Motor neuron (in vitro differentiated cells): ENCODE measurements at regions of chr7 and their contacts with region 1.

Region 1: DNA sequence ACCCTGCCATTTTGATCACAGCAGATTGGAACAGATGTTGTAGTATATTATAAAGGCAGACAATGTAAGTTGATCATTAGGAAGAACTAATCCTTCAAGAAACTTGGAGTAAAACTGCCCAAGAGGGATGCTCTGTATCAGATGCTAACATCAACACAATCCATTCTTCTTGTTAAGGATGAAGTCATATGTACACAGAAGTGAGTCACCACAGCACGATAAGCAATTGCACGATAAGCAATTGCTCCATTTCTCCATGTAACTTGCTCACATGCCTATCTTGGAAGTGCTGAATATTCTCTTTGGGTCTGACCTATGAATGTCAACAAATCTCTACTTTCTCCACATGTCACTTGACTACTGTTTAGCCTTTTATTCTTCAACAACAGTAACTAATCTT is 41.5 kb upstream of the DMTF1 start:
- ATAC-seq: peak in 6 of 8 experiments; percentile 34 to 100 (median 78)
- H3K4me3 ChIP-seq: no peak overlapping the region
- H3K27ac ChIP-seq: no peak overlapping the region
- H3K4me1 ChIP-seq: no peaks in the 10 kb centered on the region

Region 2: DNA sequence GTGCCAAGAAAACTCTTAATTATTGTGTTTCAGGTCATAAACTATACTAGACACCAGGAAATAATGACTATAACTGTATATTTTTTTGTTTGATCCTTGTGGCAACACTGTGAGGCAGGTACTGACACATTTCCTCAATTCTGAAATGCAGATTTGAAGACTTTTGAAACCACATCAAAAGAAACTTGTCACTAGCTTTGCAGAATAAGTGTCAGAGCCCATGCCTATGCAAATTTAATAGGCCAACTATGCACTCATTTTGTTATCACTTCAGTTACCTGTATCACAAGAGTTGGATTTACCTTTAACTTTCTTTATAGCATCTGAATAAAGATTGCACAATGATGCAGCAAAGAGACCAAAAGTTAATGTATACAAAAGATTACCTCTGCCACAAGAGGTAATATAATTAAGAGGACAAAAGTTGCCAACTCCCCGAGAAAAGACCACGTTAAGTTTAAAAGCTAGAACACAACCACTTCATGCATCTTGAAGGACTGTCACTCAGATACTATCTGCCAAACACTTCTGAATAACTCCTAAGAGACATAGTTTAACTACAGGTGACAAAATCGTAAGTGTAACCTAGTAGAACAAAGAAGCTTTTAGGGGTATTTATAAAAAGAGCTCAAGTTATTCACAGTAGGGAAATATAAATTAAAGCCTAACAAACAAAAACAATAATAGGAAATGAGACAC is 131.8 kb before region 1 on chr7:
- in situ Hi-C with region 1: loop called in 1 of 9 experiments (anchors 25 kb)
- ATAC-seq: no peak
- H3K4me3 ChIP-seq: no peak overlapping the region
- H3K27ac ChIP-seq: no peak overlapping the region
- H3K4me1 ChIP-seq: no peaks in the 10 kb centered on the region

Region 3: DNA sequence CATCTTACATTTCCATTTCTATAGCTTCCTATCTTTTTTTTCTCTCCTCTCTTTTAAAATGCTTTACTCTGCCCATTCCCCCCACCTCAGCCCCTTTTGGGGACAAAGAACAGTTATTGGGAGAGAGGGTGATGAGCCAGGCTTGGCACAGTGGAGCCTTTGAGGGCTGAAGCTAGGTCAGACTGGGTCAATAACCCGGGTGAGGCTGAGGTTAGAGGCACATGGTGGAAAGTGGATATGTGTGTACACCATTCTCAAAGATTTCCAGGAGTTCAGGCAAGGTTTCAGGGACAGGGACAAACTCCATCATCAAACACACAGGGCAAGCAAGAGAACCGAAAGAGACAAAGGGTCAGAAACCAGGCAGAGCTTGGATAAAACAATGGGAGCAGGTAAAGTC is 353.2 kb after region 1 on chr7:
- in situ Hi-C with region 1: no loop called
- ATAC-seq: no peak
- H3K4me3 ChIP-seq: no peak overlapping the region
- H3K27ac ChIP-seq: no peak overlapping the region
- H3K4me1 ChIP-seq: peaks cover 0 to 9% of the 10 kb centered on the region in 2 donors

Region 4: GRCh38 chr7:87886875-87887274 is 776.1 kb after region 1 on chr7:
- in situ Hi-C with region 1: no loop called
- ATAC-seq: no peak
- H3K4me3 ChIP-seq: no peak overlapping the region
- H3K27ac ChIP-seq: no peak overlapping the region
- H3K4me1 ChIP-seq: no peaks in the 10 kb centered on the region